BJ (cell line): ENCODE measurements at regions of chr3 and their contacts with region 1.

Region 1: GRCh38 chr3:185659942-185660921 is 74.1 kb downstream of the SENP2 start:
- DNase-seq: no peak
- H3K4me3 ChIP-seq: no peak overlapping the region
- H3K27me3 ChIP-seq: no peaks in the 10 kb centered on the region
- CTCF ChIP-seq: peak; percentile 99

Region 2: DNA sequence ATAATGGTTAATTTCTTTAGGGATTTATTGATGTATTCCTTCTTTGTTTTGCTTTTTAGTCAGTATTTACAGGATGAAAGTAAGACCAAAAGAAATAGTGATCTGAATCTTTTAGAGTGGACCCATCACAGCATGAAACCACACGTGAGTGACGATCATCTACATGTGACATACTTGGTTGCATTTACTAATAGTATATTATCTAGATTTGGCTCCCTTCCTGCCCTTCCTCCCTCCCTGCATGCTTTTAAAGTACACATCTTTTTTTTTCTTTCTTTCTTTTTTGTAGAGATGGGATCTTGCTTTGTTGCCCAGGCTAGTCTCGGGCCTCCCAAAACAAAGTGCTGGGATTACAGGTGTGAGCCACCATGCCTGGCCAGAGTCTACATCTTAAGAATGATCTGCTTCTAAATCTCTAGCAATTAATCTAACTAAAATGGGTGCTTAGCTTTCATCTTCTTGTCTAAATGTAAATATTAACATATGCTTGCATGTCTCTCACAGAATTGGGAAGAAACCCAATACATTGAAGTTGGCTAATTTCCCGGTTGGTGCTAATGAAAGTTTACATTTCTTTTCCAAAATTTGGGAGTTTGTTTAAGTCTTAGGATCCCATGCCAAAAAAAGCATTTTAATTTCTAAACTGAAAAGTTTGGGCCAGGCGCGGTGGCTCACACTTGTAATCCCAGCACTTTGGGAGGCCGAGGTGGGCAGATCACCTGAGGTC is 36.1 kb before region 1 on chr3:
- CTCF ChIA-PET with region 1: no interaction called
- POLR2A ChIA-PET with region 1: no interaction called
- DNase-seq: no peak
- H3K4me3 ChIP-seq: no peak overlapping the region
- H3K27me3 ChIP-seq: no peaks in the 10 kb centered on the region
- CTCF ChIP-seq: no peak

Region 3: GRCh38 chr3:185677146-185677829 is 17.1 kb after region 1 on chr3:
- CTCF ChIA-PET with region 1: interaction called, 108 read pairs
- POLR2A ChIA-PET with region 1: interaction called, 14 read pairs
- DNase-seq: no peak
- H3K4me3 ChIP-seq: no peak overlapping the region
- H3K27me3 ChIP-seq: no peaks in the 10 kb centered on the region
- CTCF ChIP-seq: peak; percentile 81

Region 4: DNA sequence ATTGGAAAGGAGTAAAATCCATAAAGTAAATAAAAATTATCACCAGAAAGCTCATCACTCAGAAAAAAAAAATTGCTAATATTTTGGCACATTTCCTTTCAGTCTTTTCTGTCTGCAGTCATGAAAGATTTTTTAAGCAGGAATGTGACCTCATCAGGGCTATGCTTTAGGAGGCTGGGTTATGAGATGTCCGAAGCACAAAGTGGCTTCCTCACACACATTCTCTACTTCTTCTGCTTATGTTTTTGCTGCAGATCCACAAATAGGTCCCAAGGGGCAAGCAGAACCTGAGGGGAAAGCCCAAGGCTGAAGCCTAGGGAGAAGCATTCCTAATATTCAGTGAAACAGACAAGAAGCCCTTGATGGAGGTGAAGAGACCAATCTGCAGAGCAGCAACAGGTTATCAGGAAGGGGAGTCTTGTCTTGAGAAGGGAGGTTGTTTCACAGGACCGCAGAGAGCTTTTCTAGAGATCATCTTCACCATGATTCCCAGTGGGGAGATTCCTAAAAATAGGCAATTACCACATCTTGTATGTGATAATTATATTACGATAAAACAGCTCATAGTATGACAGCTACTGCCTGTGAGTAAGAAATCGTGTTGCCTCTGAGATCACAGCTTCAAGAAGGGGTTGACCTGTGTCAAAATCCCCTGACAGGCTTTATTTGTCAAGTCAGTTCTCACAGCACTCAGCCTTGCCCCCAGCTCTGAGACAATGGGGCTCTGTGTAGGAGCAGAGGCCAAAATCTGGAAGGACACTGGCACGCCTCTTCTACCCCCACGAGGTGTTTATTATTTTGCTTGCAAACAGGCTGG is 104.1 kb after region 1 on chr3:
- CTCF ChIA-PET with region 1: interaction called, 22 read pairs
- POLR2A ChIA-PET with region 1: no interaction called
- DNase-seq: no peak
- H3K4me3 ChIP-seq: no peak overlapping the region
- H3K27me3 ChIP-seq: no peaks in the 10 kb centered on the region
- CTCF ChIP-seq: no peak

Region 5: GRCh38 chr3:185823078-185824044 is 163.1 kb after region 1 on chr3:
- CTCF ChIA-PET with region 1: interaction called, 18 read pairs
- POLR2A ChIA-PET with region 1: interaction called, 6 read pairs
- DNase-seq: no peak
- H3K4me3 ChIP-seq: peak overlapping the region; percentile 92
- H3K27me3 ChIP-seq: no peaks in the 10 kb centered on the region
- CTCF ChIP-seq: peak; percentile 28

Region 6: GRCh38 chr3:185912929-185913901 is 253.0 kb after region 1 on chr3:
- CTCF ChIA-PET with region 1: interaction called, 11 read pairs
- POLR2A ChIA-PET with region 1: no interaction called
- DNase-seq: no peak
- H3K4me3 ChIP-seq: no peak overlapping the region
- H3K27me3 ChIP-seq: no peaks in the 10 kb centered on the region
- CTCF ChIP-seq: no peak

Region 7: DNA sequence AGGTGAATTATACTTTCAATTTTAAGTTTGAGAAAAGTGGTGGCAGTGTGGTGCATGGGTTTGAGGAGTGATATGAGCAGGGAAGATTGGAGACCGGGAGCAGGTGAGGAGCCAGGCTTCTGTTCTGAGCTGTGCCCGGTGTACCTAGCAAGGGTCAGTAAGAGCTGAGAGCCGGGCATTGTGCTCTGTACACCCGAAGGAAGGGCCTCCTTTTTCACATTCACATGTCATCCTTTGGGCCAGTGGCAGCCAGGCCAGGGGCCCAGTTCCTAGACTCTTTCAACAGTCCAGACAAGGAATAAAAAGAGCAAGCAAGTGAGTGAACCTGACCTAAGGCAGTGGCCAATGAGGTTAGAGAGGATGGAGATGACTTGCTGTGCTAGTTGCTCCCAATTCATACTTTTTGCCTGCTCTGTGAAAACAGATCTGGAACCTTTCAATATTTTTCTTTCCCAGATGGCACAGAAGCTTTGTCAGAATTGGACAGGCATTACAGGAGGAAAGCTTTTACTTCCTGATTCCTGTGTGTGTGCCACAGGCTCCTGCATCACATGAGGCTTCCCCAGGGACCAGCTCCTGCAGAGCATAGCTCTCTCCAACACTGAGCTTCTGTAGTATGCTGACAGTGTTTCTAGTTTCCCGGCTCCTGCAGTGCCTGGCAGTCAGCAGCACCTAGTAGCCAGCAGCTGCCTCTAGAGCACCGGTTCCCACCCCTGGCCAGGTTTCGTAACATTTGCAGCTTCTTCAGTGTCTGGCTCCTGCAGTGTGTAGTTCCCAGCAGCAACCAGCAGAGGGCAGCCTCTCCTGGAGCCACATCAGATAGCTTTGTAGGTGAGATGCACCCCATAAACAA is 282.9 kb after region 1 on chr3:
- CTCF ChIA-PET with region 1: interaction called, 24 read pairs
- POLR2A ChIA-PET with region 1: no interaction called
- DNase-seq: no peak
- H3K4me3 ChIP-seq: no peak overlapping the region
- H3K27me3 ChIP-seq: no peaks in the 10 kb centered on the region; the same call in 1 of the 2 replicates
- CTCF ChIP-seq: peak; percentile 100